ENCODE measurements at regions of chrX and their contacts with region 1.

Region 1: GRCh38 chrX:120790118-120790517 is 85.5 kb downstream of the CT47B1 start:
- DNase-seq: no peak
- ATAC-seq: peak in 3 of 4 donors; percentile 67 to 82 (median 72)
- H3K4me3 ChIP-seq: no peak overlapping the region
- H3K27ac ChIP-seq: no peak overlapping the region
- H3K4me1 ChIP-seq: peaks cover 2% of the 10 kb centered on the region
- H3K27me3 ChIP-seq: no peaks in the 10 kb centered on the region
- CTCF ChIP-seq: peak; percentile 84

Region 2: DNA sequence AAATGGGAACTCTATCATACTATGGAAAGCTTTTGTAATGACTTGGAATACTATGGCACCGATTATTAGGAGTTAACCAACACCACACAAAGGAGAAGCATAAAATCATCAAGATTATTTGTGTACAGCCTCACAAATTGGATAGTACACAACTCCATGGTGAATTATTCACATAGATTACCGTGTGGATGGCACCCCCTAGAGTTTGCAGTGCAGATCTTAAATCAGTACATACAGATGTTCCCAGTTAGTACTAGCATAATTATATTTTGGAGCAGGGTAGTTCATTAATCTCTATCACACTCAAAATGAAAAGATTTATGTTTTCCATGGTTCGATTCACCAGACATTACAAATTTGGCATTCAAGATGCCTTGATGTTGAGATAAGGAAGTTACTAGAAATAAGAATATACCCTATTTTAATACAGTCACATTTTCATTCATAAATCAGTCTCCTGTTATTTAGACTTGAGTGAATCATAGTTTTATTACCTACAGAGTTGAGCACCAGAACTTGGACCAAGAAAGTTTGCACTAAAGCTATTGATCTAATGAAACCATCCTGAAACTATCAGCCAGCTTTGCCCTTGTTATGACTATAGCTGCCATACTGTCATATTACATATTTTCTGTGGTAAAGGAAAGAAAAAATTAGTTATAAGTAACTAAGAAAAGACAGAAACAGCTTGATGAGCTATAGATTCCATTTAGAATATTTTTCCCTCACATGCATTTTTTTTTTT is 789.1 kb after region 1 on chrX:
- intact Hi-C with region 1: loop called in 1 of 2 experiments (anchors 10 kb)
- DNase-seq: no peak
- ATAC-seq: no peak
- H3K4me3 ChIP-seq: no peak overlapping the region
- H3K27ac ChIP-seq: no peak overlapping the region
- H3K4me1 ChIP-seq: no peaks in the 10 kb centered on the region
- H3K27me3 ChIP-seq: no peaks in the 10 kb centered on the region
- CTCF ChIP-seq: peak; percentile 24

Measured in psoas muscle (tissue), 8 donors.